HCT116 (cell line): ENCODE measurements at regions of chr11 and their contacts with region 1.

Region 1: DNA sequence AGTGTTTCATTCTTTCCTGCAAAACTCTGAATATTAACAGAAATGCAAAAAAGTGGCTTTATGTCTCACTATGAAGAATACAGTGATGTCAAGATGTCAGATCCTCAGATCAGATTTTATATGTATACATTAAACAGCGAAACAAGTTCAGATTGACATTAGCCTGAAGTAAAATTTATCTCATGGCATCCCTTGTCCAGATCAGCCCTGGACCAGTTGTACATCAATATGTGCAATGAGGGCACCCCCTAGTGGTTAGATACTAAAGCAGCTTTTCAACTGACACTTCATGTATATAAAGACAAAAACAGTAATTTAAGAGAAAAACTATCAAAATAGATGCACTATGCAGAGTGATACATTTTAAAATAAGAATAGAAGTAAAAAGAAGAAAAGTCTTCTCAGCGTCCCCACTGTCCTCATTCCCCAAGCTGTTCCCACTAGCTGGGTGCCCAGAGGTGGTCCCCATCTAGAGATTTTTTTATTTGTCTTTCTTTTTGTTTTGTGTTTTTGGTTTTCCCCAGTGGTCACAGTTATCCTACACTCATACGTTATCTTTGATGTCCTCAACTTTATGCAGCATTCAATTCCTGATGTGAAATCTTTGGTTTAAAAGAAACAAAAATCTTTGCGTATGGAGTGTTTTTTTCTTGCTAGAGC is 2193.4 kb upstream of the RAG2 start:
- DNase-seq: peak; percentile 8
- ATAC-seq: no peak
- H3K4me3 ChIP-seq: no peak overlapping the region
- H3K27ac ChIP-seq: no peak overlapping the region
- H3K4me1 ChIP-seq: no peaks in the 10 kb centered on the region
- H3K27me3 ChIP-seq: no peaks in the 10 kb centered on the region
- CTCF ChIP-seq: peak; percentile 6 to 69 (median 49); a peak in 4 of 6 replicates
- POLR2A ChIP-seq: no peak
- RAD21 ChIP-seq: peak; percentile 38; the same call in 1 of the 2 replicates

Region 2: DNA sequence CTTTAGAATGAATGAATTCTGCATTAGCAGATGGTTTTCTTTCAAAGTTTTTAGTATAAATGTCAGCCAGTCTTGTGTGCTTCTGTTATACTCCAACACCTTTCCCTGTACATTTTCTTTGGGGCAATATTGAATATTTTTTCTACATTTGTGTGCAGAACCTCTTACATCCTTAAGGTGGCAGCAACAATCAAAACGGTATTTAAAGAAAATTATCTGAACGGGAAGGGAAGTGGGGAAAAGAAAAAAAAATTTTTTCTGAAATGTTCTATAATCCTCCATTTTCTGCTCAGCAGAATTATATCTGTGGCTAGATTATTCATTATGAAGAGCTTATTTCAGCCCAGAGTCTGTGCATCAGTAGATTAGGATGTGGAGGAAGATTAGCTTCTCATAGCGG is 1846.0 kb before region 1 on chr11:
- CTCF ChIA-PET with region 1: no interaction called
- POLR2A ChIA-PET with region 1: no interaction called
- RAD21 ChIA-PET with region 1: no interaction called
- intact Hi-C with region 1: loop called (anchors 10 kb)
- DNase-seq: no peak
- ATAC-seq: no peak
- H3K4me3 ChIP-seq: no peak overlapping the region
- H3K27ac ChIP-seq: no peak overlapping the region
- H3K4me1 ChIP-seq: no peaks in the 10 kb centered on the region
- H3K27me3 ChIP-seq: no peaks in the 10 kb centered on the region
- CTCF ChIP-seq: peak in 2 of 3 experiments; percentile 40 to 47; a peak in 4 of 6 replicates
- POLR2A ChIP-seq: no peak
- RAD21 ChIP-seq: peak; percentile 17; the same call in 1 of the 2 replicates

Region 3: GRCh38 chr11:37002831-37003230 is 1788.6 kb before region 1 on chr11:
- CTCF ChIA-PET with region 1: no interaction called
- POLR2A ChIA-PET with region 1: no interaction called
- RAD21 ChIA-PET with region 1: no interaction called
- intact Hi-C with region 1: loop called (anchors 2 kb)
- DNase-seq: no peak
- ATAC-seq: no peak
- H3K4me3 ChIP-seq: no peak overlapping the region
- H3K27ac ChIP-seq: no peak overlapping the region
- H3K4me1 ChIP-seq: no peaks in the 10 kb centered on the region
- H3K27me3 ChIP-seq: no peaks in the 10 kb centered on the region
- CTCF ChIP-seq: no peak
- POLR2A ChIP-seq: no peak
- RAD21 ChIP-seq: no peak

Region 4: DNA sequence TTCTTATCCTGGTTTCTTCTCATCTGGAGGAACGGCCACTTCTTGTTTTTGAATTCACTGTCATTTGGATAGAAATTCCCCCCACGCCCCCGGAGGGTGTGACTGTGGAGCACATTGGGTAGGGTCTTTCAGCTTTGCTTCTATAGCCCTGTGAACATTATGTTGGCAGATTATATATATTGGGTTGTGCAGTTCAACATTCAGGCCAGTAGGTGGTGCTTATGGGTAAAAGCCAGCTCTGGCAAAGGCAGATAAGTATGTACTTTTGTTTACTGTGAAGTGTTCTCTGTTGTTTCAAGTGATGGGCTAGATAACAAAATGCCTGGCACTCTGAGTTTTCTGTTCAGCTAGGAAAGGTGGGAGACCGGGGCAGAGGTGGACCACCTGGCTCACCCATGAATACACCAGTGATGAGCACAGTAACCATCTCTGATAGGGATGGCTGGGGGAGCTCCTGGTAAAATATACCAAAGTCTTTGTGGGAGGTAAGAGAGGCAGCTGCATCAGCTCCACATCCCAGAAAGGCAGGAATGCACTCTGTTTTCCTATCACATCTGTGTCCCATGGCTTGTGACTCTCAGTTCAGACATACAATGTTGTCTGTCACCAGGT is 845.2 kb before region 1 on chr11:
- CTCF ChIA-PET with region 1: no interaction called
- POLR2A ChIA-PET with region 1: no interaction called
- RAD21 ChIA-PET with region 1: no interaction called
- intact Hi-C with region 1: loop called (anchors 5 kb)
- DNase-seq: no peak
- ATAC-seq: no peak
- H3K4me3 ChIP-seq: no peak overlapping the region
- H3K27ac ChIP-seq: no peak overlapping the region
- H3K4me1 ChIP-seq: no peaks in the 10 kb centered on the region
- H3K27me3 ChIP-seq: no peaks in the 10 kb centered on the region
- CTCF ChIP-seq: peak in 2 of 3 experiments; percentile 55 to 60; a peak in 4 of 6 replicates
- POLR2A ChIP-seq: no peak
- RAD21 ChIP-seq: peak; percentile 24; the same call in 1 of the 2 replicates

Region 5: GRCh38 chr11:38305682-38306081 is 485.8 kb before region 1 on chr11:
- CTCF ChIA-PET with region 1: no interaction called
- POLR2A ChIA-PET with region 1: no interaction called
- RAD21 ChIA-PET with region 1: no interaction called
- intact Hi-C with region 1: no loop called
- DNase-seq: no peak
- ATAC-seq: no peak
- H3K4me3 ChIP-seq: no peak overlapping the region
- H3K27ac ChIP-seq: no peak overlapping the region
- H3K4me1 ChIP-seq: no peaks in the 10 kb centered on the region
- H3K27me3 ChIP-seq: no peaks in the 10 kb centered on the region
- CTCF ChIP-seq: no peak
- POLR2A ChIP-seq: no peak
- RAD21 ChIP-seq: no peak